GM12878 (cell line): ENCODE measurements at regions of chr1 and their contacts with region 1.

Region 1: GRCh38 chr1:150561974-150562445 is 12.8 kb downstream of the ADAMTSL4 start:
- DNase-seq: no peak
- ATAC-seq: peak; percentile 64
- H3K4me3 ChIP-seq: peak overlapping the region; percentile 80
- H3K27ac ChIP-seq: peak overlapping the region; percentile 98
- H3K4me1 ChIP-seq: peaks cover 42% of the 10 kb centered on the region
- H3K27me3 ChIP-seq: no peaks in the 10 kb centered on the region
- CTCF ChIP-seq: no peak
- EP300 ChIP-seq: no peak
- POLR2A ChIP-seq: peak; percentile 31
- RAD21 ChIP-seq: no peak

Region 2: GRCh38 chr1:150127868-150128267 is 434.1 kb before region 1 on chr1:
- CTCF ChIA-PET with region 1: no interaction called
- POLR2A ChIA-PET with region 1: no interaction called
- RAD21 ChIA-PET with region 1: no interaction called
- SMC1A ChIA-PET with region 1: no interaction called
- in situ Hi-C with region 1: no loop called
- intact Hi-C with region 1: no loop called
- DNase-seq: no peak
- ATAC-seq: no peak
- H3K4me3 ChIP-seq: no peak overlapping the region
- H3K27ac ChIP-seq: no peak overlapping the region
- H3K4me1 ChIP-seq: no peaks in the 10 kb centered on the region
- H3K27me3 ChIP-seq: no peaks in the 10 kb centered on the region
- CTCF ChIP-seq: no peak
- EP300 ChIP-seq: no peak
- POLR2A ChIP-seq: no peak
- RAD21 ChIP-seq: no peak

Region 3: DNA sequence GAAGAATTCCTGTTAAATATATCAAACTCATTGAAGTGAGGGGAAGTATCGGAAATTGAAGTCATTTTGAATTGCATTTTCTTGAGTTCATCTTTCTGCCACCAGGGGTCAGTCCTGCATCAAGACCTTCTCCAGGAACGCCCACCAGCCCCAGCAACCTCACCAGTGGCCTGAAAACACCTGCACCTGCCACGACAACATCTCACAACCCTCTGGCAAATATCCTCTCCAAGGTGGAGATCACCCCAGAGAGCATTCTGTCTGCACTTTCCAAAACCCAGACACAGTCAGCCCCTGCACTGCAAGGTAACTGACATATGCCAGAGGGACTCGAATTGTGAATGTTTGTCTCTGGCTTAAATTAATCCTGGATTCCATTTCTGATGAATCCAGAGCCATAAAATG is 97.6 kb before region 1 on chr1:
- CTCF ChIA-PET with region 1: interaction called, 16 read pairs
- POLR2A ChIA-PET with region 1: no interaction called
- RAD21 ChIA-PET with region 1: interaction called, 4 read pairs
- SMC1A ChIA-PET with region 1: interaction called, 3 read pairs
- in situ Hi-C with region 1: no loop called
- intact Hi-C with region 1: no loop called
- DNase-seq: no peak
- ATAC-seq: peak; percentile 82
- H3K4me3 ChIP-seq: no peak overlapping the region
- H3K27ac ChIP-seq: no peak overlapping the region
- H3K4me1 ChIP-seq: no peaks in the 10 kb centered on the region
- H3K27me3 ChIP-seq: no peaks in the 10 kb centered on the region
- CTCF ChIP-seq: peak; percentile 70 to 85 (median 72)
- EP300 ChIP-seq: no peak
- POLR2A ChIP-seq: no peak
- RAD21 ChIP-seq: peak; percentile 77

Region 4: DNA sequence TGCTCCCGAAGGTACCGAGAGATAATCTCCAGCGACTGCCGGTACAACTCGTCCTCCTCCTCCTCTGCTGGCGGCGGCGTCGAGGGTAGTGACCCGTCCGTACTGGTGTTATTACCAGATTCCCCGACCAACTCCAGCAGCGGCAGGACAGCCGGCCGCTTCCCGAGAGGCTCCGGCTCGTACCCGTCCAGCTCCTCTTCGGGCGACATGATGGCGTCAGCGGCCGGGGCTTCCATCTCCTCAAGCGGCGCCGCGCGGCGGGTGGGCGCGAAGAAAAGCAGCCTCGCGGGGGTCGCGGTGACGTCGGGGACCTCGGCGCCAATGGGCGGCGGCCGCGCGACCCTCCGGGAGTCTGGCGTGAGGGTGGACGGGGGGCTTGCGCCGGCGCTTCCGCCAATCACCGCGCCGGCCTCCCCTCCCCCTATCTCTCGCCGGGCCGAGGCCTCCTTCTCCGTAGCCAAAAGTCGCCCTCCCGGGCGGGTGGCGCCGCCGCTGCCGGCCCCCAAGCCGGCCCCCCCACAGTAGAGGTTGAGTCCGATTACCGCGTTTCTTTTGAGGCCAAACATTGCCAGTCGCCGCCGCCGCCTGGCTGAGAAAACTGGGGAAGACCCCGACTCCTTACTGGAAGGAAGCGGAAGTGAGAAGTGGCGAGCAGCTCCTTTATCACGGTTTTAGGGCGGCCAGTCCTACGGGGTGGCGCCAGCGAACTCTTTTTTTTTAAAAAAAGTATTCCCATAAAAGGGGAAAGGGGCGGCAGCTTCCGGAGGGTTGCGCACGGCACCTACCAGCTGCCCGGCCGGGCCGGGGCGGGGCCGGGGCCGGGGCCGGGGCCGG is 17.2 kb after region 1 on chr1 and contains the start of gene MCL1:
- CTCF ChIA-PET with region 1: interaction called, 289 read pairs
- POLR2A ChIA-PET with region 1: interaction called, 324 read pairs
- RAD21 ChIA-PET with region 1: interaction called, 387 read pairs
- SMC1A ChIA-PET with region 1: interaction called, 388 read pairs
- in situ Hi-C with region 1: no loop called
- intact Hi-C with region 1: loop called (anchors 1 kb)
- DNase-seq: peak; percentile 69
- ATAC-seq: peak; percentile 90
- H3K4me3 ChIP-seq: peak within 1 kb of the TSS; percentile 85
- H3K27ac ChIP-seq: peak within 1 kb of the TSS; percentile 96
- H3K4me1 ChIP-seq: peaks cover 3% of the 10 kb centered on the region; the same call in 1 of the 2 replicates
- H3K27me3 ChIP-seq: no peaks in the 10 kb centered on the region
- CTCF ChIP-seq: no peak
- EP300 ChIP-seq: peak in 1 of 2 experiments; percentile 47; a peak in 1 of 4 replicates
- POLR2A ChIP-seq: peak; percentile 94
- RAD21 ChIP-seq: 0 out of 2 replicates have a peak, but pooled peaks have one; percentile 15
- polyA plus RNA-seq, gene MCL1: 18.1 to 25.5 TPM

Region 5: DNA sequence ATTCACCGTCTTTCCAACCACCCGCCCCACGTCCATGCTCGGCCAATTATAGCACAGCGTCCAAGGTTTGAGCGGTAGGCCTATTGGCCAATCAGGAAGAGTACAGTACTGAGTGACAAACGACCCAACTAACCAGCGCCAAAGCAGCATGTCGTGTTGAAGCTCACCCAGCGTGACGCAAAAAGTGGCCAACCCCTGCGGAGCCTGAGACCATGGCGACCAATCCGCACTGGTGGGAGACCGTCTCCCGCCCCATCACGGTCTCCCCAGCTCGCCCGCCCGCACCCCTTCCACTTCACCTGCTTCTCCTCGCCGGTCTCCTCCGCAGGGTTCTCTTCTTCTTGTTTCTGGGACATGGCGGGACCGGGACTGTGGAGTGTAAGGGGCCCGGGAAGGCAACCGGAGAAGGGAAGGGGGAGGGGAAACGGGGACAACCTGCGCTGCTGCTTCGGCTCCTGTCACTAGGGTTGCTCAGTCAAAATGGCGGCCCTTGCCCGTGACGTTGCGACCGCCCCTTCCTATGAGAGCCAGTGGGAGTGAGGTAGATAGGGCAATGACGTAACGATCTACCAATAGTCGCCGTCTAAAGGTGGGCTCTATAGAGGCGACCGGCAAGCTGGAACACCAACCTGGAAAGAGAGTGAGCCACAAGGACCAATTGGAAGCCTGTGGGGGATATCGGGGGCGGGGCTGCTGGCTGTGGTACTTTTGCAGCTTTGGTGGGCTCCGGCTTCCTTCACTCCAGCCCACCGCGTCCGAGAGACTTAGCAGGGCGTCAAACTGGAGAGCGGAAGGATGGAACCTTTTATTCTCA is 67.3 kb after region 1 on chr1 and contains the start of gene ENSA:
- CTCF ChIA-PET with region 1: interaction called, 390 read pairs
- POLR2A ChIA-PET with region 1: interaction called, 67 read pairs
- RAD21 ChIA-PET with region 1: interaction called, 149 read pairs
- SMC1A ChIA-PET with region 1: interaction called, 367 read pairs
- in situ Hi-C with region 1: no loop called
- intact Hi-C with region 1: loop called (anchors 2 kb)
- DNase-seq: peak; percentile 99
- ATAC-seq: peak; percentile 95
- H3K4me3 ChIP-seq: peak within 1 kb of the TSS; percentile 81
- H3K27ac ChIP-seq: peak within 1 kb of the TSS; percentile 97
- H3K4me1 ChIP-seq: peaks cover 5% of the 10 kb centered on the region; the same call in 1 of the 2 replicates
- H3K27me3 ChIP-seq: no peaks in the 10 kb centered on the region
- CTCF ChIP-seq: no peak
- EP300 ChIP-seq: no peak
- POLR2A ChIP-seq: peak; percentile 92
- RAD21 ChIP-seq: no peak
- polyA plus RNA-seq, gene ENSA: 56.1 to 86.8 TPM

Region 6: GRCh38 chr1:150696590-150697524 is 134.8 kb after region 1 on chr1 and contains the start of gene GOLPH3L:
- CTCF ChIA-PET with region 1: interaction called, 14 read pairs
- POLR2A ChIA-PET with region 1: interaction called, 8 read pairs
- RAD21 ChIA-PET with region 1: interaction called, 23 read pairs
- SMC1A ChIA-PET with region 1: interaction called, 7 read pairs
- in situ Hi-C with region 1: no loop called
- intact Hi-C with region 1: loop called (anchors 5 kb)
- DNase-seq: peak; percentile 99
- ATAC-seq: peak; percentile 100
- H3K4me3 ChIP-seq: peak within 1 kb of the TSS; percentile 72
- H3K27ac ChIP-seq: peak within 1 kb of the TSS; percentile 45
- H3K4me1 ChIP-seq: peaks cover 3% of the 10 kb centered on the region; the same call in 1 of the 2 replicates
- H3K27me3 ChIP-seq: no peaks in the 10 kb centered on the region
- CTCF ChIP-seq: no peak
- EP300 ChIP-seq: no peak
- POLR2A ChIP-seq: peak; percentile 36; the same call in 1 of the 2 replicates
- RAD21 ChIP-seq: no peak
- polyA plus RNA-seq, gene GOLPH3L: 11.8 to 12.1 TPM

Region 7: DNA sequence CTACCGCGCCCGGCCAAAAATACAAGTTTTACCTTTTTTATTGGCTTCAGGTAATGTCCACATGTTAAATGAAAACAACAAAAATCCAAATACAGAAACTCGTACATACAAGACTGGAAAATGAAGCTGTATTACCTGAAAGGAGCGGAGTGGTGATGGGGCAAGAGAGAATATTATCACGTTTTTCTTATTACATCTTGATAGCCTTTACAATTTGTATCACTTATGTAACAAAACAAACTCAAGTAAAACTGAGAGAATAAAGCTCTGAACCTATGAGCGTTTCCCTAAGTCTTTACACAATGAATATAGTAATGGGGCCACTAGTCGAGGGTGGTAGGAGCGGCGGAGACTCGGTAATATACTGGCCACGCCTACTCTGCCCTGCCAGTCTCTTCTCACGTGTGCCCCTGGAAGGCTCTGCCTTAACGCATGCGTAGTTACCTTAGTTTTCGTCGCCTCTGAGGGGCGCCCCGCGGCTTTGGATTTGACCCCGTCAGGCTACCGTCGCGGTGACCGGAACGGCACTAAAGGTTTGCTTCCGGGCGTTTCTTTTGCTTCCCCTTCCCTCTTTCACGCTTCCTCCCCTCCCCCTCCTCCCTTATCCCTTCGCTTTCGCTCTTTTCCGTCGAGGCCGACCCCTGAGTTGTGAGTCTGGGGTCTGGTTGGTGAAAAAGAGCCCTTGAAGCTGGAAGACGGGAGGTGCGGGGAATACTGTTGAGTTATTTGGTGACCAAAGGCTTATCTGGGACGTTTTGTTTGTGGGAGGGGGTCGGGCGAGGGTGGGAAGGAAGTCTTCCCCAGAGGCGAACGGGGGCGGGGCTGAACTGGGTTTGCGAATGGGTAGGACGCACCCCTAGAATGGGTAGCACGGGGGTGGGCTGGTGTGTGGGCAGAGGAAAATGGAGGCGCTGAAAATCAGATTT is 364.1 kb after region 1 on chr1 and contains the start of gene SETDB1:
- CTCF ChIA-PET with region 1: interaction called, 17 read pairs
- POLR2A ChIA-PET with region 1: interaction called, 8 read pairs
- RAD21 ChIA-PET with region 1: interaction called, 14 read pairs
- SMC1A ChIA-PET with region 1: interaction called, 5 read pairs
- in situ Hi-C with region 1: no loop called
- intact Hi-C with region 1: loop called (anchors 5 kb)
- DNase-seq: peak; percentile 92
- ATAC-seq: peak; percentile 93
- H3K4me3 ChIP-seq: peak within 1 kb of the TSS; percentile 98
- H3K27ac ChIP-seq: peak within 1 kb of the TSS; percentile 98
- H3K4me1 ChIP-seq: peaks cover 12% of the 10 kb centered on the region
- H3K27me3 ChIP-seq: no peaks in the 10 kb centered on the region
- CTCF ChIP-seq: peak in 1 of 3 experiments; percentile 22; a peak in 1 of 6 replicates
- EP300 ChIP-seq: peak; percentile 26 to 38; a peak in 1 of 4 replicates
- POLR2A ChIP-seq: peak; percentile 71
- RAD21 ChIP-seq: no peak
- polyA plus RNA-seq, gene SETDB1: 14.5 to 14.7 TPM